ENCODE measurements at regions of chr5 and their contacts with region 1.

Region 1: DNA sequence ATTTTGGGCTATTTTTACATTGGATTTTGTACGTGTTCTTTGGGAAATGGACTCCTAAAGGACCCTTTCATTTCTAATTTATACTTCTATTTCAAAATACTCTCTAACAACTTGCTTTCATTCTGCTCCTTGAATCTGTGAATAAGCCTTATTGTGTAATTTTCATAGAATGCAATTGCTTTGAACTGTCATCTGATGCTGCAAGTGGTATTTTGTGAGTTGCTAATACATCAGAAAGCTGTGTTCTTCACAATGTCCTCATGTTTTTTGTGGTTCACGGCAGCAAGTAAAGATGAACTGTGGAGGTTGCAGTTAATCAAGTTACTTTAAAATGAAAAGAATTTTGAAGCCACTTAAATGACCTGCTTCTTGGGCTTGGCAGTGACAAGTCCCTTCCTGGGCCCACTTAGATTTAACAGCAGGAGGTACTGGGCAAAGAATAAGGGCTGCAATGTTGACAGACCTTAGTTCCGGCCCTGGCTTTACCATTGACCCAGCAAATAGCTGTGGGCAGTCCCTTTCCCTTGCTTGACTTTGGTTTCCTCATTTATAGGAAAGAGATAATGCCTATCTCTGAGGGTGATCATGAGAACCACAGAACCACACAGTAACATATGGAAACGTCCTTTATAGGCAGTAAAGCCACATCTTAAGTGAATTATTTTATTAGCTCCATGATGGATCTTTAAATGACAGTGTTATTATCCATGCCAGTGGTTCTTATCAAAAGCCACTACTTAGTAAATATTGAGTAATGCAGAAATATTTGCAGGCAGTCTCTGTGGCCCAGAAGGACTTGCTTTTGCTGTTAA is 54.8 kb downstream of the IQGAP2 start:
- DNase-seq: no peak
- H3K4me3 ChIP-seq: no peak overlapping the region
- H3K27ac ChIP-seq: no peak overlapping the region
- H3K4me1 ChIP-seq: no peaks in the 10 kb centered on the region
- H3K27me3 ChIP-seq: no peaks in the 10 kb centered on the region
- CTCF ChIP-seq: no peak

Region 2: GRCh38 chr5:76425928-76426804 is 31.7 kb before region 1 on chr5:
- CTCF ChIA-PET with region 1: no interaction called
- dilution Hi-C with region 1: no loop called
- in situ Hi-C with region 1: no loop called
- intact Hi-C with region 1: no loop called
- DNase-seq: no peak
- H3K4me3 ChIP-seq: no peak overlapping the region
- H3K27ac ChIP-seq: no peak overlapping the region
- H3K4me1 ChIP-seq: no peaks in the 10 kb centered on the region
- H3K27me3 ChIP-seq: peaks cover 6% of the 10 kb centered on the region
- CTCF ChIP-seq: no peak

Region 3: GRCh38 chr5:77003246-77003645 is 545.4 kb after region 1 on chr5:
- CTCF ChIA-PET with region 1: no interaction called
- dilution Hi-C with region 1: no loop called
- in situ Hi-C with region 1: no loop called
- intact Hi-C with region 1: loop called (anchors 5 kb)
- DNase-seq: no peak
- H3K4me3 ChIP-seq: no peak overlapping the region
- H3K27ac ChIP-seq: no peak overlapping the region
- H3K4me1 ChIP-seq: peaks cover 4% of the 10 kb centered on the region
- H3K27me3 ChIP-seq: peaks cover 9% of the 10 kb centered on the region
- CTCF ChIP-seq: no peak